A673 (cell line): ENCODE measurements at regions of chr6 and their contacts with region 1.

Region 1: DNA sequence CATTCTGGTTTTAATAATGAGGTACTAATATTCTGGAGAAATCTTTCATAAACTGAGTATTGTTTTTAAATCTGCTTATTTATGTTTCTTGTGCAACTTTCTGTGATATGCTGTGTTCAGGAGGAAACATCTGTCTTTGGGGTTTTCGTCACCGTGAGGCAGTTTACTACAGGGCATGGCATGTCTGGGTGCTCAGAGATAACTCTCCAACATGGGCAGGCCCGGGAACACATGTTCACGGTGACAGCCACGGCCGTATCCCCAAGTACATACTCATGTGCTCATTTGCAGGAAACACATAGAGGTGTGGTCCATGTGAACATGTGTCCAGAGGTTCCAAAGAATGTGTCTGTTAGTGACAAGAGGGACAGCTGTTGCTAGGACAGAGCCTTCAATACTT is 62.1 kb upstream of the CNKSR3 start:
- DNase-seq: no peak
- H3K4me3 ChIP-seq: no peak overlapping the region
- H3K27ac ChIP-seq: no peak overlapping the region
- H3K4me1 ChIP-seq: no peaks in the 10 kb centered on the region
- H3K27me3 ChIP-seq: no peaks in the 10 kb centered on the region
- CTCF ChIP-seq: no peak

Region 2: GRCh38 chr6:154805288-154805911 is 232.8 kb after region 1 on chr6:
- CTCF ChIA-PET with region 1: no interaction called
- POLR2A ChIA-PET with region 1: interaction called, 11 read pairs
- intact Hi-C with region 1: no loop called
- DNase-seq: peak; percentile 61
- H3K4me3 ChIP-seq: no peak overlapping the region
- H3K27ac ChIP-seq: no peak overlapping the region
- H3K4me1 ChIP-seq: no peaks in the 10 kb centered on the region
- H3K27me3 ChIP-seq: no peaks in the 10 kb centered on the region
- CTCF ChIP-seq: peak; percentile 55

Region 3: GRCh38 chr6:154962753-154963152 is 390.2 kb after region 1 on chr6:
- CTCF ChIA-PET with region 1: no interaction called
- POLR2A ChIA-PET with region 1: no interaction called
- intact Hi-C with region 1: no loop called
- DNase-seq: no peak
- H3K4me3 ChIP-seq: no peak overlapping the region
- H3K27ac ChIP-seq: no peak overlapping the region
- H3K4me1 ChIP-seq: peaks cover 7% of the 10 kb centered on the region
- H3K27me3 ChIP-seq: no peaks in the 10 kb centered on the region
- CTCF ChIP-seq: no peak